ENCODE measurements at regions of chr12 and their contacts with region 1.

Region 1: DNA sequence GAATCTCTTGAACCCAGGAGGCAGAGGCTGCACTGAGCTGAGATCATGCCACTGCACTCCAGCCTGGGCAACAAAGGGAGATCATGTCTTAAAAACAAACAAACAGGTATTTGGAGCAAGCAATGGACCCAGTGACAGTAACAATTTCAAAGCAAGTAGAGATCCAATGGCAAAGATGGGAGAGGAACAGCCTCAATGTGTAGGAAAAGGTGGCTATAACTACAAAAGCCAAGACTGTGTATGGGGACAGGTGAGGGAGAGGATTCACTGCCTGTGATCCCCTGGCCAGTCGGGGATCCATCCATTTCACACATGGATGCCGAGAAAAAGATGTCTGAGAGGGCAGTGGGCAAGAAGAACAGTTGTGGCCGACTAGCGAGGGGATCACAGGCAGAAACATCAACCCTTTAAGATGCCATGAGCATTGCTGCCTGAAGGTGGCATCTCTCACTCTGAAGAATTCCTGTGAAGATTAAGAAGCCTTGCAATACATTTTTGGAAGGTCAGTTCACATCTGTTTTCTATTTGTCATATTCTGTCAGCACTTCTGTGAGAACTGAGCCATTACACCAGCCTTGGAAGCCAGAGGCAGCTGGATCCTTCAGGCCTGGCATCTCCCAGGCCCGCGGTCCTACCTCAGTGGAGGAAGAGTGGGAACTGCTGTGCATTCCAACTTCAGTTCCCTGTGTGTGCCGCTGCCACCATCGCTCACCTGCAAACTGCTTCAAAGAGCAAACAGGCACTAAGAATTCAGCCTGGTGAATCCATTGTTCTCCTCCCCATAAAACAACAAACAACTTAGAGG is 54.5 kb upstream of the FRS2 start:
- DNase-seq: peak; percentile 85 to 89
- H3K4me3 ChIP-seq: peak overlapping the region; percentile 23
- H3K4me3 Mint-ChIP-seq: peak overlapping the region; percentile 78
- H3K27ac Mint-ChIP-seq: peak overlapping the region; percentile 99
- H3K4me1 ChIP-seq: peaks cover 56% of the 10 kb centered on the region
- H3K4me1 Mint-ChIP-seq: peaks cover 64% of the 10 kb centered on the region
- H3K27me3 ChIP-seq: no peaks in the 10 kb centered on the region
- H3K27me3 Mint-ChIP-seq: no peaks in the 10 kb centered on the region
- CTCF ChIP-seq: peak; percentile 82 to 88

Region 2: GRCh38 chr12:68675101-68675842 is 740.4 kb before region 1 on chr12:
- CTCF ChIA-PET with region 1: no interaction called
- POLR2A ChIA-PET with region 1: no interaction called
- intact Hi-C with region 1: no loop called
- DNase-seq: no peak
- H3K4me3 ChIP-seq: no peak overlapping the region
- H3K4me3 Mint-ChIP-seq: no peak overlapping the region
- H3K27ac Mint-ChIP-seq: no peak overlapping the region
- H3K4me1 ChIP-seq: peaks cover 7% of the 10 kb centered on the region; the same call in 1 of the 2 replicates
- H3K4me1 Mint-ChIP-seq: no peaks in the 10 kb centered on the region
- H3K27me3 ChIP-seq: no peaks in the 10 kb centered on the region
- H3K27me3 Mint-ChIP-seq: no peaks in the 10 kb centered on the region
- CTCF ChIP-seq: no peak

Region 3: DNA sequence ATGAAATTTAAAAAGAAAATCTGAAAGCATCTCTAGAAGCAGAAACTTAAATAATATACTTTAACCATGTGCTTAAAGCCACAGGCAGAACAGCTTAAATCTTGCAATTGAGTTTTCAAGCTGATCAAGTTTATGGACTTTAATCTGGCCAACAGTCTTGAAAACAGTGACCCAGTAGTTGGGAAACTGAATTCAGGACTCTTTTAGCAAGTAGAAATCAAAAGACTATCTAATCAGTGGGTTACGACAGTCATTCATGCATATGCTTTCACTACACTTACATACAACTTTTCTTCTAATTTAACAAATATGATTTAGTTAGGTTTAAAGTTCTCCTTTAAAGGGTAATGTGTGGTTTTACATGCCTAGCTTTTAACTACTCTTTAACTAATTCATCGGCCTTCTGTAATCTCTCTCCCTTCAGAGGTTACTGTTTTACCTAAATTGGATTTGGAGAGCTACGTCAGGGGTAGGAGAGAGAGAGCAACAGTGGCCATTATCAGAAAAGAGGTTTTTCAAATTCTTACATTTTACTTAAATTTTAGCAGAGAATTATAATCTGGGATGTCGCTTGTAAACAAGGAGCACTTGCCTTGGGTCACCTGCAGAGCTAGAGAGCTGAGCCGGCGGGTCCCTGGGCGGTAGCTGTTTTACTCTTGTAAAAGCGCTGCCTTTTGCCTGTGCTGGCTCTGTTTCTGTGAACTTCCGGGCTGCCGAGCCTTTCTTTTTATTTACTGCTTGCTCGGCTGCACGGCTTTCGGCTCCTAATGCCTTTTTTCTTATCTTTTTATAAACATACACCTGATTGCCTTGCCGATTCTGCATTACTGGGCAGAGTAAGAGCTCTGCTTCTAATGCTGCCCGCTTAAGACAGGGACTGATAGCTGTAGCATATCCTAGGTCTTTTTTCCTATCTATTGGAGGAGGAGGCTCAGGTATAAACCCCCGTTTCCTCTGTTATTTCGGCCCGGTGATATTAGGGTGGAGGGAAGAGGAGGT is 84.9 kb before region 1 on chr12:
- CTCF ChIA-PET with region 1: no interaction called
- POLR2A ChIA-PET with region 1: interaction called, 18 read pairs
- intact Hi-C with region 1: loop called (anchors 1 kb)
- DNase-seq: peak; percentile 49 to 56
- H3K4me3 ChIP-seq: peak overlapping the region; percentile 60
- H3K4me3 Mint-ChIP-seq: peak overlapping the region; percentile 97
- H3K27ac Mint-ChIP-seq: peak overlapping the region; percentile 79
- H3K4me1 ChIP-seq: peaks cover 36% of the 10 kb centered on the region
- H3K4me1 Mint-ChIP-seq: peaks cover 40% of the 10 kb centered on the region
- H3K27me3 ChIP-seq: no peaks in the 10 kb centered on the region
- H3K27me3 Mint-ChIP-seq: no peaks in the 10 kb centered on the region
- CTCF ChIP-seq: no peak

Region 4: GRCh38 chr12:69366796-69367195 is 48.9 kb before region 1 on chr12:
- CTCF ChIA-PET with region 1: interaction called, 5 read pairs
- POLR2A ChIA-PET with region 1: interaction called, 4 read pairs
- intact Hi-C with region 1: loop called (anchors 1 kb)
- DNase-seq: no peak
- H3K4me3 ChIP-seq: no peak overlapping the region
- H3K4me3 Mint-ChIP-seq: no peak overlapping the region
- H3K27ac Mint-ChIP-seq: peak overlapping the region; percentile 57
- H3K4me1 ChIP-seq: peaks cover 48% of the 10 kb centered on the region
- H3K4me1 Mint-ChIP-seq: peaks cover 31% of the 10 kb centered on the region
- H3K27me3 ChIP-seq: no peaks in the 10 kb centered on the region
- H3K27me3 Mint-ChIP-seq: no peaks in the 10 kb centered on the region
- CTCF ChIP-seq: no peak

Region 5: DNA sequence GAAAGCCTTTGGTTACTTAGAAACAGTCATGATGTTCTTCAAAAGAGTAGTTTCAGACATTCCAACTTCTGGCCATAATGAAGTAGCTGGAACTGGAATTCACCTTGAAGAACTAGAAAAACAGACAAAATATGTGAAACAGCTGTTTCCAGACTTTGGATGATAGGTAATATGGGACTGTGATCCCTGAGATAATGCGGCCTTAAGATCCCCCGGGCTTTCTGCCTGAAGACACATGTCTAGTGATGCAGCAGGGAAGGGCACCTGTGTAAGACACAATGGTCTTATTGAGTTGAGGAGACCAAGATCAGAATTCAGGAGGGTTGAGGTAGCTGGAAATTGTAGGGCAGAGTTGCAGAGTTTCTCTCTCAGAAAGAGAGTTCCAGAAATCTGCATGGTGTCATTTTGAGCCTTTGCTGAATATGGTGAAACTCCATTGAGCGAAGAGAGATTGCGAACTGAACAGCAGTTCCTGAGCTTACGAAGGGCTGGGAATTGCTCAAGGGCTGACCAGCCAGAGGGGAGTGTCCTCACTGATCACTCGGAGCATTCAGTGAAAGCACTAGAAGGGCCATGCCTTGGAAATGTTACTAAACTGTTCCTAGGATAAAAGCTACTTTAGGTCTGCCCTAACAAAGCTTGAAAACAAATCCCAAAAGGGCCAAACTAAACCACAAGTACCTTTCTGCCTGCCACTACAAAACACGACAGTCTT is 12.8 kb after region 1 on chr12:
- CTCF ChIA-PET with region 1: interaction called, 3 read pairs
- POLR2A ChIA-PET with region 1: interaction called, 7 read pairs
- intact Hi-C with region 1: loop called (anchors 1 kb)
- DNase-seq: peak; percentile 38 to 51
- H3K4me3 ChIP-seq: no peak overlapping the region
- H3K4me3 Mint-ChIP-seq: peak overlapping the region; percentile 1
- H3K27ac Mint-ChIP-seq: peak overlapping the region; percentile 36
- H3K4me1 ChIP-seq: peaks cover 41% of the 10 kb centered on the region
- H3K4me1 Mint-ChIP-seq: peaks cover 31% of the 10 kb centered on the region
- H3K27me3 ChIP-seq: no peaks in the 10 kb centered on the region
- H3K27me3 Mint-ChIP-seq: no peaks in the 10 kb centered on the region
- CTCF ChIP-seq: no peak

Region 6: DNA sequence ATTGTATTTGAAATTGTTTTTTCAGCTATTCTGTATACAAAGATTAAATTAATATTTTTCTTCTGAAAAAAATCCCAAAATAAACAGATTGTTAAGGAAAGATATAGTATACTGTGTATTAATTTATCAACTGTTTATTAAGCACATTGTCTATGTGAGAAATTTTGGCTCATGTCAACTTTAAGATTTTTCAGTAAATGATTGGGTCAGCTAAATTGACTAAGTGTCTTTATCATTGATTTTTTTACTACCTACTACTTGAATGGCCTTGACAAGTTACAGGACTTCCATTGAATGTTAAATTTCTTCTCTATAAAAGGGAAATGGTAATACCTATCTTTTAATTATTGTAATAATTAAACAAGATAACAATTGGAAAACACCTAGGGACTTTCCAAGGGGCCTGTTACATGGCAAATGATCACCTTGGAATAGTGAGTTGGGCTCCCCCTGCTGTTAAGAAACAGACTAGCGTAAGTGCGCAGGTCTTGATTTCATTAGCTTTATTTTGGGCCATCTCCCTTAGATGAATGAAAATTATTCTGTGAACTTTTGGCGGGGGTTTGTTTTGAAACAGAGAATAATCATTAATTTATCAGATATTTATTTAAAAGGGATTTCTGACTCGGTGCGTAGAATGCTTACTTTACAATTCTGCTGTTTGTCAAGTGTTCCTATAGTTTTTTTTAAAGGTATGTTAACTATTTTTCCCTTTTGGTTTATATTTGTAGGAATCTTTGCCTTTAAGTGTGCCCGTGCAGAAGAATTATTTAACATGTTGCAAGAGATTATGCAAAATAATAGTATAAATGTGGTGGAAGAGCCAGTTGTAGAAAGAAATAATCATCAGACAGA is 155.1 kb after region 1 on chr12:
- CTCF ChIA-PET with region 1: interaction called, 12 read pairs
- POLR2A ChIA-PET with region 1: interaction called, 8 read pairs
- intact Hi-C with region 1: loop called (anchors 1 kb)
- DNase-seq: peak; percentile 65 to 73
- H3K4me3 ChIP-seq: no peak overlapping the region
- H3K4me3 Mint-ChIP-seq: no peak overlapping the region
- H3K27ac Mint-ChIP-seq: no peak overlapping the region
- H3K4me1 ChIP-seq: peaks cover 13% of the 10 kb centered on the region
- H3K4me1 Mint-ChIP-seq: peaks cover 27% of the 10 kb centered on the region
- H3K27me3 ChIP-seq: no peaks in the 10 kb centered on the region
- H3K27me3 Mint-ChIP-seq: no peaks in the 10 kb centered on the region
- CTCF ChIP-seq: peak; percentile 77 to 83

Region 7: DNA sequence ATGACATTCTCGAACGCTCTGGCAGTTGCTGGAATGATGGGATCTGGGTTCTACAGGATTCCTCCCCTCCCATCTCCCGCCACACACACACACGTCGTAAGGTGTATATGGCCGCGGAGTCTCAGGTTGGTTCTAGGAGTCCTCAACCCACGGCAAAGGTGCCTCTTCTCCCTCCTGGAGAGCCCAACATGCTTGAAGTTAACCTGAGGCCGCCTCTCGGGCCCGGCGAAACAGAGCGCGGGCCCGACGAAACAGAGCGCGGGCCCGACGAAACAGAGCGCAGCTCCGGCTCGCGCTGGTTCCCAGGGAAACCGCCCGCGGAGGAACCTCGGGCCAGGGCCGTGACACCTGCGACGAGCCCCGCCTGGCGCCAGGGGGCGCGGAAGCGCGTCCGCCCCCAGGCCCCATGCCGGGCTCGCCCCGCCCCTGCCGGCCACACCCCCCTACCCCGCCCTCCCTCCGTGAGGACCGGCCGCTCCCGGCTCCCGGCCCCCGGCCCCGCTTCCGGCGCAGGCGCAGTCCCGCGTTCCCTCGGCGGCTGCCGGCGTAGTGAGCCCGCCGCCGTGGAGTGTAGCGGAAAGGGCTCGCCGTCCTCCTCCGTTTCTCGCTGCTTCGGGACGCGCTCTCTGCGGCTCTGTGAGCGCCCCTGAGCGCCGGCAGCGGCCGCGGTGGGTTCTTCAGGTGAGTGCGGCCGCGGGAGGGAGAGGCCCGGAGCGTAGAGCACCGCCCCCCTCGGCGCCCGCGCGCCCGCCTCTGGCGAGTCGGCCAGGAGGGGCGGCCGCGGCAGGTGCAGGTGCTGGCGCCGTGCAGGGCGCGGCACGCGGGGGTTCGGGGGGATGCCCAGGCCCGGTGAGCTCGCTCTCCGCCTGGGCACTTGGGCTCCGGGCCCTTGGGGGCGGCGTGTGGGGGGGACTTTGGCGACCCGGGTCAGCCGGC is 322.9 kb after region 1 on chr12 and contains the start of gene RAB3IP:
- CTCF ChIA-PET with region 1: no interaction called
- POLR2A ChIA-PET with region 1: interaction called, 7 read pairs
- intact Hi-C with region 1: loop called (anchors 1 kb)
- DNase-seq: peak; percentile 92 to 95
- H3K4me3 ChIP-seq: peak within 1 kb of the TSS; percentile 90
- H3K4me3 Mint-ChIP-seq: peak within 1 kb of the TSS; percentile 94
- H3K27ac Mint-ChIP-seq: peak within 1 kb of the TSS; percentile 97
- H3K4me1 ChIP-seq: peaks cover 15% of the 10 kb centered on the region; the same call in 1 of the 2 replicates
- H3K4me1 Mint-ChIP-seq: peaks cover 10% of the 10 kb centered on the region
- H3K27me3 ChIP-seq: no peaks in the 10 kb centered on the region
- H3K27me3 Mint-ChIP-seq: no peaks in the 10 kb centered on the region
- CTCF ChIP-seq: peak; percentile 69 to 74
- total RNA-seq, gene RAB3IP: 70.8 and 82.5 TPM in 2 replicates